Dorsolateral prefrontal cortex (tissue), 120 donors: ENCODE measurements at regions of chr2 and their contacts with region 1.

Region 1: DNA sequence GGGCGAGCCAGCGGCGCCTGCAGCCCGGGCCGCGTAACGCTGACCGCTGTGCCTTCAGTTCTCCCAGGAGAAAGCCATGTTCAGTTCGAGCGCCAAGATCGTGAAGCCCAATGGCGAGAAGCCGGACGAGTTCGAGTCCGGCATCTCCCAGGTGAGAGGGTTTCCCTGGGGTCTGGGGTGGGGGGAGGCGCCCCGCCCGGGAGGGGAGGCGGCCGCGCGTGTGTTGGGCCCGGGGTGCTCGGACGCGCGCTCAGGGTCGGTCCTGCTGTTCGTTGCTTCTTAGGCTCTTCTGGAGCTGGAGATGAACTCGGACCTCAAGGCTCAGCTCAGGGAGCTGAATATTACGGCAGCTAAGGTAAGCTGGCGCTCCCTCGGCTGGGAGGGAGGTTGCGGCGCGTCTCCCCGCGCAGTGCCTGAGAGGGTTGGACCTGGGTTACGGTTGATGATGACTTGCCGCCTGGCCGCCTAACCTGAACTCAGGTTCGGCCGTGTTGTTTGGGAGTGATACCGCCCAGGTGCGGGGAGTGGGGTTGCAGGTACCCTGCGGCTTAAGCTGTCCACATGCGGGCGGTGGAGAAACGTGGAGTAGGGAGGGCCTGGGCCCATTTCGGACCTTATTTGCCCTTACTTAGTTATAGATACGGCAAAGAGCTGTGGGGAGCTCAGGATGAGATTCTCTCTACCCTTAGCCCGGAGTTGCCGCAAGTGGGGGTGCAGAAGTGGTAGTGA is 638 bp downstream of the RPS7 start:
- DNase-seq: no peak
- H3K4me3 ChIP-seq: peak overlapping the region; percentile 63 to 96 (median 84)
- H3K27ac ChIP-seq: peak overlapping the region; percentile 41 to 96 (median 86)
- H3K27me3 ChIP-seq: no peaks in the 10 kb centered on the region
- CTCF ChIP-seq: peak in 1 of 56 donors; percentile 0

Region 2: DNA sequence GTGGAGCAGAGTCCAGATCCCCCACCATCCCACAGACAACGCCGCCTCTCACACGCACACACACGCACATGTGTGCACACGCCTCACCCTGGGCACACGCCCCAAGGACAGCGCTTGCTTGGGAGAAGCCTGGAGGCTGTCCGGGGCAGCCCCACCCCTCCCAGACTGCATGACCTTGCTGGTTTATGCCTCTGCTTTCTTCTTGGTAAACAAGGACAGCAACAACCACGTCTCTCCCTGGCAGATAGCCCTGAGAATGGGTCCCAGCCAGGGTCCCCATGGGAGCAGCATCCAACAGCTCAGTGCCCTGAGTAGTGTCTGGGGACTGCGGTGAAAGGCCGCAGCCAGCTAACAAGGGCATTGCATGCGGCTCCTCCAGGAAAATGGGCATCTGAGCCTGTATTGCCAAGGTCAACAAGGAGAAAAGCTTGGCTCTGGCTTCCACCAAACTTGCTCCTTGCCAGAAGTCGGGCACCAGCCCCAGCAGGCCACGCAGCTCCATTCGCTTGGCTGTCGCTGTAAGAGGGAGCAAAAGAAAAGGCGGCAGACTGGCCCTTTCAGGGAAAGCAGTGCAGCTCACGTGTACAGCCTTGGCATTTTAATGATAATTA is 432.6 kb before region 1 on chr2:
- intact Hi-C with region 1: no loop called
- DNase-seq: peak in 1 of 10 donors; percentile 63
- H3K4me3 ChIP-seq: peak overlapping the region in 2 of 59 donors; percentile 6 to 9
- H3K27ac ChIP-seq: peak overlapping the region in 21 of 59 donors; percentile 4 to 66 (median 30)
- H3K27me3 ChIP-seq: no peaks in the 10 kb centered on the region
- CTCF ChIP-seq: no peak

Region 3: GRCh38 chr2:3379647-3380534 is 195.8 kb before region 1 on chr2 and contains the start of gene TRAPPC12:
- intact Hi-C with region 1: loop called in 1 of 2 experiments (anchors 5 kb)
- DNase-seq: peak; percentile 88 to 95 (median 92)
- H3K4me3 ChIP-seq: peak within 1 kb of the TSS; percentile 65 to 99 (median 94)
- H3K27ac ChIP-seq: peak within 1 kb of the TSS; percentile 27 to 99 (median 95)
- H3K27me3 ChIP-seq: no peaks in the 10 kb centered on the region
- CTCF ChIP-seq: peak in 53 of 56 donors; percentile 27 to 76 (median 58)
- total RNA-seq, gene TRAPPC12: 132 to 231 (median 178) TPM

Region 4: DNA sequence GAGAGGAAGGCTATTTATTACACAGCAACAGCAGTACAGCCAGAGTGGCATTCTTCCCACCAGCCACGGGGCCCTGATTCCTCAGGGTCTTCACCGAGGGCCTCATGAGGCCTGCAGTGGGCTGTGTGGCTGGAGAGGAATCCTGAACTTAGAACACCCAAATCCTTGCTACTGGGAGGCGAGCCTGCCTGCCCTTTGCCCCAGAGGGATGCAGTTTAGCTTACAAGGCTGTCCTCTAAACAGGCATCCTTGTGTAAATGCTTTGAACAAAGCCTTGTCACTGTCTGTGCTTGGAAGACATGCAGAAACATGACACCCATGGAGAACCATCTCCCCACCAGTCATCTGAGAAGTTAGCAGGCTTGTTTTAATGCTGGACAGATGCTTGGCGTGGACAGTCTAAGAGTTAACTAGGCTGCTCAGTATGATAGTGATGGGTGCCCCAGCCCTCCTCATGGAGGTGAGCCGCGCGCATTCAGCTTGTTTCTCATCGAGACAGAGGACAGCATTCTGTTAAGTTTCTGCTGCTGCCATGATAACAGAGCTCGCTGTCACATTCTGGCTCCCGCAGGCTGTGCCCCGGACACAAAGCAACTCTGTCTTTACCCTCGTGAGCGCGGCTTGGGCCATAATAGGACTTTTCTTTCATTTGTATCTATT is 99.2 kb before region 1 on chr2:
- intact Hi-C with region 1: loop called in 1 of 2 experiments (anchors 5 kb)
- DNase-seq: peak in 9 of 10 donors; percentile 50 to 82 (median 69)
- H3K4me3 ChIP-seq: peak overlapping the region in 15 of 59 donors; percentile 1 to 42 (median 20)
- H3K27ac ChIP-seq: peak overlapping the region; percentile 83 to 100 (median 96)
- H3K27me3 ChIP-seq: no peaks in the 10 kb centered on the region
- CTCF ChIP-seq: peak in 1 of 56 donors; percentile 11

Region 5: DNA sequence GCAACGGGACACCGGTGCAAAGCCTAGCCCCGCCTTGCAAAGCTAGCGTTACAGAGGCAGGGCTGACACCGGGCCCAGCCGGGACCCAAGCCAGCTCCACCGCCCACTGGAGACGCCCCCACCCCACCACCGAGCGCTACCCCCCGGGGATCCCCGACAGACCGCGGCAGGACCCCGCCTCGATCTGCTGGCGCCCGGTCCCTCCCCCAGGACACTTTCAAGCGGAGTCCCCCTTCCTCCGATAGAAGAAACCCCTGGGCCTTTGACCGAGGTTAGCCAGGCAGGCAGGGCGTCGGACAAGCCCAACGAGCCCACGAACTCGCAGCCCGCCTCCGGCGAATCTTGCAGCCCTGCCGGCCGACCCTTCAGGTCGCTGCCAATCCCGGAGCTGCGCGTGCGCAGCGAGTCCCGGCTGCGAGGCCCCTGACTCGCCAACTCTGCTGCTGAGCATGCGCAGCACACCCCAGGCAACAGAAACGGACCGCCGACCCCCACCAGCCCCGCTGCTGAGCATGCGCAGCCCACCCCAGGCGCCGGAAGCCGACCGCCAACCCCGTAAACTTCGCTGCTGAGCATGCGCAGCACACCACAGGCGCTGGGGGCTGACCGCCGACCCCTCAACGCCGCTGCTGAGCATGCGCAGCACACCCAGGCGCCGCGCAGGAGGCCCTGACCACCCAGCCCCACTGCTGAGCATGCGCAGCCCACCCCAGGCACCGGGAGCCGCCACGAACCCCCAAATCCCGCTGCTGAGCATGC is 57.0 kb before region 1 on chr2:
- intact Hi-C with region 1: loop called (anchors 1 to 2 kb)
- DNase-seq: peak; percentile 82 to 96 (median 93)
- H3K4me3 ChIP-seq: peak overlapping the region; percentile 71 to 100 (median 92)
- H3K27ac ChIP-seq: peak overlapping the region; percentile 92 to 100 (median 99)
- H3K27me3 ChIP-seq: no peaks in the 10 kb centered on the region
- CTCF ChIP-seq: peak in 6 of 56 donors; percentile 6 to 43 (median 18)

Region 6: GRCh38 chr2:3633089-3633981 is 57.6 kb after region 1 on chr2:
- intact Hi-C with region 1: no loop called
- DNase-seq: peak in 4 of 10 donors; percentile 5 to 38 (median 24)
- H3K4me3 ChIP-seq: no peak overlapping the region
- H3K27ac ChIP-seq: peak overlapping the region in 2 of 59 donors; percentile 78 to 82
- H3K27me3 ChIP-seq: no peaks in the 10 kb centered on the region
- CTCF ChIP-seq: no peak

Region 7: DNA sequence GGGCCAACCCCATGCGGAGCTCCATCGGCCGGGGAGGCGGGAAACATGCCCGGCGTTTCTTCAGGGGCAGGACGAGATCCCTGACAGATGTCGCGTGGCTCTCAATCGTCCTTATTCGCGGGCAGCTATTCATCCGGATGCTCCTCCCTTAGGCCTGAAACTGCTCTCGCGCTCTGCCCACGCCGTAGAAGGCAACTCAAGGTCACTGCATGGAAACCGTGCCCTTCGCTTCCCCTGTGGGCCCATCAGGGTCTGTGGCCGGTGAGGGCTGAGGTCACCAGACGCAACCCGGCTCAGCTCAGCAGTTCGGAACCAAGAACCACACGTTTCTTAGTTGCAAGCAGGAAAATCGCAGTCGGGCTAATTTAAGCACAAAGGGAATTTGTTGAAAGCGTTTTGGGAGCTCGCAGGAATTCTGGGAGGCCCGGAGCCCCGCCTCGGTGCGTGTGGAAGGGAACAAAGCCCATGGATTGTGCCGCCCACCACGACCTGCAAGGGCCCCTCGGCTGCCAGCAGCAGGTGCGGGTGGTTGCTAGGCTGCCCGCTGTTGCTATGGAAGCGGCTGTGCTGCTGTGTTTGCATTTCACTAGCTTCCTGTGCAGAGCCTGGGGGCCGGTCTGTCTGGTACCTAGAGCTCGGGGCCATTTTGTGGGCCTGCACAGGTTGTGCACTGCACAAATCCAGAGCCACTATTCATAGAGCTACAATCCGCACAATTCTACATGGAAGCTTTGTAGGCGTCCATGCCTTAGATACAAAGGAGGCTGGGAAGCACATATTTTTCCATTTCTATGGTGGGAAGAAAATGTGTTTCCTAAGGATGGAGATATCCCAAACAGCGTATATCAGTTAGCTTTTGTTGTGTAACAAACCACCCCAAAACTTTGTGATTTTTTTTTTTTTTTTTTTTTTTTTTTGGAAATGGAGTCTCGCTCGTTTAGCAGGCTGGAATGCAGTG is 76.3 kb after region 1 on chr2:
- intact Hi-C with region 1: loop called in 1 of 2 experiments (anchors 5 kb)
- DNase-seq: peak; percentile 39 to 88 (median 82)
- H3K4me3 ChIP-seq: peak overlapping the region; percentile 28 to 71 (median 53)
- H3K27ac ChIP-seq: peak overlapping the region; percentile 15 to 95 (median 86)
- H3K27me3 ChIP-seq: no peaks in the 10 kb centered on the region
- CTCF ChIP-seq: peak in 3 of 56 donors; percentile 8 to 18 (median 16)

Region 8: GRCh38 chr2:3780477-3781402 is 205.0 kb after region 1 on chr2:
- intact Hi-C with region 1: no loop called
- DNase-seq: peak in 1 of 10 donors; percentile 24
- H3K4me3 ChIP-seq: peak overlapping the region in 1 of 59 donors; percentile 20
- H3K27ac ChIP-seq: no peak overlapping the region
- H3K27me3 ChIP-seq: peaks cover 0 to 52% (median 8%) of the 10 kb centered on the region in 45 donors
- CTCF ChIP-seq: peak in 53 of 56 donors; percentile 26 to 69 (median 46)